ENCODE measurements at regions of chr14 and their contacts with region 1.

Region 1: DNA sequence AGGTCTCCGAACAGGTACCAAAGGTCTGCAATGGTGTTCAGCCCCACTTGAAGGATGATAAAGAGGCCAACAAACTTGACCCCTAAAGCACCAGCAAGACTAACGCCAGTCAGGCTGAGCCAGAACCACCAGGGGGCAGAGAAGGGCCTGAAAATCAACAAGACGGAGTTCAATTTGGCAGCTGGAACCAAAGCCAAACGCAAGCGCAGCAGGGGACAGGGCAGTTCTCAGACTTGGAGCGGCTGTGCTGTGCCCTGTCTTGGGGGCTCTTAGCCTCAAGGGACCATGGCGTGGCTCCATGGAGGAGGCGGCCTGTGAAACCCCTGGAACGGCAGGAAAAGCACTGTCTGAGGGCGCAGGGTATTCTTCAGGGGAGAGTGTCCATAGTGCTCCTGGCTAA is 19.6 kb downstream of the POMT2 start:
- DNase-seq: peak; percentile 78
- ATAC-seq: peak; percentile 44 to 77

Region 2: DNA sequence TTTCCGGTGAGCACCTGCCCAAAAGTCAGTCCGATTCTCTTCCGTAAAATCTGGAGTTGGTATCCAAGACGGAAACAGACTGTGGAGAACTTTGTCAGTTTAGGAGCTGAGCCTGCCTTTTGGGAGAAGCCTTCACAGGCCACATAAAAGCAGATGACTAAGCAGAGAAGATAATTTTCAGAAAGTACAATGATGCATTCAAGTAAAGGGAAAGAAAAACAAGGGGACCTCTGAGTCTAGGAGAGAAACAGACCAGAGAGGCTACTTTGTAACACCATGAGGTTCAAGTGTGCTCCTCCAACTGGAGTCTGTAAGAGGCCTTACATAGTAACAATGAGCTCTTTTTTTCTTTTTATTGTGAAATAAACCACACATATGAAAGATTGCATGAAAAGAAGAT is 54.7 kb after region 1 on chr14:
- intact Hi-C with region 1: no loop called
- DNase-seq: no peak
- ATAC-seq: no peak

Region 3: GRCh38 chr14:77376771-77377501 is 75.8 kb after region 1 on chr14 and contains the starts of genes SAMD15 and TMED8:
- intact Hi-C with region 1: no loop called
- DNase-seq: peak; percentile 88
- ATAC-seq: peak; percentile 99
- total RNA-seq, gene SAMD15: 0.52 TPM in 1 of 2 donors, not detected in the other
- total RNA-seq, gene TMED8: 5.9 to 6.7 TPM

Region 4: GRCh38 chr14:77554207-77554606 is 253.1 kb after region 1 on chr14:
- intact Hi-C with region 1: loop called in 1 of 2 experiments (anchors 10 kb)
- DNase-seq: no peak
- ATAC-seq: no peak

Measured in left cardiac atrium (tissue), 4 donors.